Psoas muscle (tissue), 8 donors: ENCODE measurements at regions of chr17 and their contacts with region 1.

Region 1: GRCh38 chr17:35529866-35530265 is 7.6 kb downstream of the SLFN12L start:
- DNase-seq: no peak
- ATAC-seq: no peak
- H3K4me3 ChIP-seq: no peak overlapping the region
- H3K27ac ChIP-seq: no peak overlapping the region
- H3K4me1 ChIP-seq: no peaks in the 10 kb centered on the region
- H3K27me3 ChIP-seq: no peaks in the 10 kb centered on the region
- CTCF ChIP-seq: no peak

Region 2: GRCh38 chr17:35170968-35171771 is 358.7 kb before region 1 on chr17:
- intact Hi-C with region 1: loop called in 1 of 2 experiments (anchors 5 kb)
- DNase-seq: no peak
- ATAC-seq: peak in 1 of 4 donors; percentile 33
- H3K4me3 ChIP-seq: no peak overlapping the region
- H3K27ac ChIP-seq: no peak overlapping the region
- H3K4me1 ChIP-seq: no peaks in the 10 kb centered on the region
- H3K27me3 ChIP-seq: no peaks in the 10 kb centered on the region
- CTCF ChIP-seq: no peak

Region 3: DNA sequence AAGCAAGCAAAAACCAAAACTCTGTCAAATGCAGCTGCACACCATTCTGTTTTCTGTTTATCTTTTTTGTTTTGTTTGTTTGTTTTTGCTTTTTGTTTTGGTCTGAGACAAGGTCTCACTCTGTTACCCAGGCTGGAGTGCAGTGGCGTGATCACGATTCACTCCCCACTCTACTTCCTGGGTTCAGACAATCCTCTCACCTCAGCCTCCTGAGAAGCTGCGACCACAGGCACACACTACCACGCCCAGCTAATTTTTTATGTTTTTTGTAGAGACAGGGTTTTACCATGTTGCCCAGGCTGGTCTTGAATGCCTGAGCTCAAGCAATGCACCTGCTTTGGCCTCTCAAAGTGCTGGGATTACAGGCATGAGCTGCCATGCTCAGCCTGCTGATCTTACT is 62.0 kb before region 1 on chr17:
- intact Hi-C with region 1: no loop called
- DNase-seq: no peak
- ATAC-seq: no peak
- H3K4me3 ChIP-seq: no peak overlapping the region
- H3K27ac ChIP-seq: no peak overlapping the region
- H3K4me1 ChIP-seq: no peaks in the 10 kb centered on the region
- H3K27me3 ChIP-seq: peaks cover 0 to 6% (median 6%) of the 10 kb centered on the region in 3 donors
- CTCF ChIP-seq: no peak